WTC11 (cell line): ENCODE measurements at regions of chrX and their contacts with region 1.

Region 1: DNA sequence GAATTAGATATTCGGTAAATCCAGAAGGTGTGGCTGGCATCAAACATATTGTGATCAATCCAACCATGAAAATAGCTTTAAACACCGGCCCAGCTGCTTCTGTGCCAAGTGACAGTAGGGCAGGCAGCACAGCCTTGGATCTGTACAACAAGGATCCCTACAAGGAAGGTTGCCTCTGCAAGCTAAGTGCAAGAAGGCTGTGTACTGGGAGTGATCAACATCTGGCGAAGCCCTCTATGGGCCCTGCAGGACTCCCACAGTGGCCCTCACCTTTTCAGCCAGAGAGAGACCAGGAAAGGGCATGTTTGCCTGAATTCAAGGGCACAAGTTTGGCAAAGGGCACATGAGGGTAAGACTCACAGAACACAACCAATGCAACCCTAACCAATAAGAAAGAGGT is 9.6 kb downstream of the IRS4 start:
- DNase-seq: no peak
- ATAC-seq: peak; percentile 62
- H3K4me3 Mint-ChIP-seq: no peak overlapping the region
- H3K27ac Mint-ChIP-seq: peak overlapping the region; percentile 90
- H3K4me1 Mint-ChIP-seq: peaks cover 67% of the 10 kb centered on the region
- H3K27me3 Mint-ChIP-seq: no peaks in the 10 kb centered on the region
- CTCF ChIP-seq: no peak

Region 2: DNA sequence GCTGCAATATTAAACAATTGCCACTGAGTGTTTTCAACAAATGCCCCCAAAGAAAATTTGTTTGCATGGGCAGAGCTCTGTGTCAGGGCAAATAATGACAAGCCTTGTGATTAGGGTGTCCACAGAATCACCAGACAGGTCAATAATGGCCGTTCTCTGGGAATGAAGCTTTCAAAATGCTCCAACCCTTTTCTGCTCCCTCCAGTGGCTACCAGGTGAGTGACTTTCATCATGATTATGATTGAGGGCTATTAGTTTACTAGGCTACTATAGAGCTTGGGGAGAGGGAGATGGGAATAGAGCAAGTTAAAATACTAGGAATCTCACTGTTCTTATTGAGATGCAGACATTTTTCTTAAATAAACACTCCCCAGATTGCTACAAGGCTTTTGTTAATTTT is 13.9 kb before region 1 on chrX:
- CTCF ChIA-PET with region 1: no interaction called
- POLR2A ChIA-PET with region 1: no interaction called
- DNase-seq: no peak
- ATAC-seq: peak; percentile 38; the same call in 1 of the 2 replicates
- H3K4me3 Mint-ChIP-seq: no peak overlapping the region
- H3K27ac Mint-ChIP-seq: no peak overlapping the region
- H3K4me1 Mint-ChIP-seq: peaks cover 6% of the 10 kb centered on the region
- H3K27me3 Mint-ChIP-seq: no peaks in the 10 kb centered on the region
- CTCF ChIP-seq: no peak

Region 3: DNA sequence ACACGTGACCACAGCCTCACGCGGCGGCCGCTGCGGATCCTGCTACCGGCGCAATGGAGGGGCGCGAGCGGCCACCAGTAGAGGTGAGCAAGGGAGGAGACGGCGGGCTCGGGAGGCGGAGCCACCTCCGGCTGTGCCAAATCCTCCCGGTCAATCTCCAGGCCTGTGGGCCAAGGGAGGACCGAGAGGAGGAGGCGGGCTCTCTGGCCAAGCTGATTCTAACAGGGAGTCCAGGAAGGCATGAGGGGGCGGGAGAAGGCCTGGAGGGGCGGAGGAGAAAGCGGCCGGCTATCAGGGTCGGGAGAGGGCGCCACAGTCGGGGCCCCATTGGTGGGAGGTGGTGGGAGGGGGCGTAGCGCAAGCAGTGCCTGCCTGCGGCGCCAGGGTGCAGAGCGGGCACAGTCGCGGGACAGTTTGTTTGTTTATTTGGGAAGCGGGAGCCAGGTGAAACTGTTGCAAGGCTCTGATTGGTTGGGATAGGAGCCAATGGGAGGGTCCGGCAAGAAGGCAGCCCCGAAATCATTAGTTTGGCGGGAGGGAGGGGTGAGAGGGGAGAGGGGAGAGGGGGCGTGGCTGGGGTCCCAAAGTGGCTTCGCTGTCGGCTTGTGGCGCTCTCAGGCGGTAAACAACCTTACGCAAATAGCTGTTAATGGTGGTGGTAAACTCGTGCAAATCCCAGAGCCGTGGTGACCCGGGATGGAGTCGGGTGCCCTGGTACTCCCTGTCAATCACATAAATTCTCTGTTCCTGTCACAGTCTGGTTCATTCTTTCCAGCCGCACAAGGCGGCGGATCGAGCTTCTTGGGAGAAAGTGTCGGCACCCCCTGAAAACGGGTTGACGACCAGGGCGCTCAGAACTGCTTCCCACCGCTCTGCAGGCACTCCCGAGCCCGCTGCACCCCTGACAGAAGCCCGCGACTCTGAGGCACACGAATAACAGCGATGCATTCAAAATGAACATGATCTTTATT is 10.0 kb after region 1 on chrX and contains the start of gene IRS4:
- CTCF ChIA-PET with region 1: interaction called, 12 read pairs
- POLR2A ChIA-PET with region 1: interaction called, 6 read pairs
- DNase-seq: peak; percentile 84
- ATAC-seq: peak; percentile 80
- H3K4me3 Mint-ChIP-seq: peak within 1 kb of the TSS; percentile 78
- H3K27ac Mint-ChIP-seq: peak within 1 kb of the TSS; percentile 80
- H3K4me1 Mint-ChIP-seq: peaks cover 24% of the 10 kb centered on the region
- H3K27me3 Mint-ChIP-seq: peaks cover 32% of the 10 kb centered on the region
- CTCF ChIP-seq: no peak
- total RNA-seq, gene IRS4: 10.5 to 11.4 TPM (median 11.0 TPM) in 3 replicates

Region 4: DNA sequence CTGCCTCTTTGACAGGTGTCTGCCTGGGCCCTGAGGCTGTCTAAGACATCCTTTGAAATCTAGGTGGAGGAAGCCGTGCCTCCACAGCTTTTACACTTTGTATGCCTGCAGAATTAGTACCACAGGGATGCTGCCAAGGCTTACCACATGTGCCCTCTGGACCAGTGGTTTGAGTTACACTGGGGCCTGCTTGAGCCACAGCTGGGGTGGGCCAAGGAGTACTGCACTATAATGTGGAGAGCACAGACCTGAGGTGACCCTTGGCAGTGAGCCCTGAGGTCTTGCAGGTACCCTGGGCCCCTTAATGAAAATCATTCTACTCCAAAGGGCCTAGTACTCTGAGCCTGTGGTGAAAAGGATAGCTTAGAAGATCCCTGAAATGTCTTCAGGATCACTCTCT is 36.8 kb after region 1 on chrX:
- CTCF ChIA-PET with region 1: no interaction called
- POLR2A ChIA-PET with region 1: no interaction called
- DNase-seq: no peak
- ATAC-seq: no peak
- H3K4me3 Mint-ChIP-seq: no peak overlapping the region
- H3K27ac Mint-ChIP-seq: no peak overlapping the region
- H3K4me1 Mint-ChIP-seq: no peaks in the 10 kb centered on the region
- H3K27me3 Mint-ChIP-seq: no peaks in the 10 kb centered on the region
- CTCF ChIP-seq: no peak

Region 5: GRCh38 chrX:108900333-108900732 is 173.6 kb after region 1 on chrX:
- CTCF ChIA-PET with region 1: no interaction called
- POLR2A ChIA-PET with region 1: no interaction called
- DNase-seq: no peak
- ATAC-seq: no peak
- H3K4me3 Mint-ChIP-seq: no peak overlapping the region
- H3K27ac Mint-ChIP-seq: no peak overlapping the region
- H3K4me1 Mint-ChIP-seq: no peaks in the 10 kb centered on the region
- H3K27me3 Mint-ChIP-seq: no peaks in the 10 kb centered on the region
- CTCF ChIP-seq: no peak